CD8-positive, alpha-beta memory T cell (primary cell): ENCODE measurements at regions of chr19 and their contacts with region 1.

Region 1: GRCh38 chr19:11496391-11497163 is 9.1 kb downstream of the ZNF653 start:
- DNase-seq: peak; percentile 39 to 69 (median 44)
- H3K4me3 ChIP-seq: no peak overlapping the region
- H3K4me3 Mint-ChIP-seq: no peak overlapping the region
- H3K27ac ChIP-seq: no peak overlapping the region
- H3K27ac Mint-ChIP-seq: peak overlapping the region in 1 of 8 donors; percentile 44
- H3K4me1 ChIP-seq: no peaks in the 10 kb centered on the region
- H3K4me1 Mint-ChIP-seq: peaks cover 4 to 6% (median 5%) of the 10 kb centered on the region in 3 donors
- H3K27me3 ChIP-seq: no peaks in the 10 kb centered on the region
- H3K27me3 Mint-ChIP-seq: no peaks in the 10 kb centered on the region

Region 2: GRCh38 chr19:11223214-11223613 is 273.4 kb before region 1 on chr19:
- CTCF ChIA-PET with region 1: no interaction called
- POLR2A ChIA-PET with region 1: interaction called, 13 read pairs
- DNase-seq: no peak
- H3K4me3 ChIP-seq: no peak overlapping the region
- H3K4me3 Mint-ChIP-seq: no peak overlapping the region
- H3K27ac ChIP-seq: no peak overlapping the region
- H3K27ac Mint-ChIP-seq: no peak overlapping the region
- H3K4me1 ChIP-seq: no peaks in the 10 kb centered on the region
- H3K4me1 Mint-ChIP-seq: no peaks in the 10 kb centered on the region
- H3K27me3 ChIP-seq: no peaks in the 10 kb centered on the region
- H3K27me3 Mint-ChIP-seq: peaks cover 7 to 12% of the 10 kb centered on the region in 2 donors